ENCODE measurements at regions of chr17 and their contacts with region 1.

Region 1: DNA sequence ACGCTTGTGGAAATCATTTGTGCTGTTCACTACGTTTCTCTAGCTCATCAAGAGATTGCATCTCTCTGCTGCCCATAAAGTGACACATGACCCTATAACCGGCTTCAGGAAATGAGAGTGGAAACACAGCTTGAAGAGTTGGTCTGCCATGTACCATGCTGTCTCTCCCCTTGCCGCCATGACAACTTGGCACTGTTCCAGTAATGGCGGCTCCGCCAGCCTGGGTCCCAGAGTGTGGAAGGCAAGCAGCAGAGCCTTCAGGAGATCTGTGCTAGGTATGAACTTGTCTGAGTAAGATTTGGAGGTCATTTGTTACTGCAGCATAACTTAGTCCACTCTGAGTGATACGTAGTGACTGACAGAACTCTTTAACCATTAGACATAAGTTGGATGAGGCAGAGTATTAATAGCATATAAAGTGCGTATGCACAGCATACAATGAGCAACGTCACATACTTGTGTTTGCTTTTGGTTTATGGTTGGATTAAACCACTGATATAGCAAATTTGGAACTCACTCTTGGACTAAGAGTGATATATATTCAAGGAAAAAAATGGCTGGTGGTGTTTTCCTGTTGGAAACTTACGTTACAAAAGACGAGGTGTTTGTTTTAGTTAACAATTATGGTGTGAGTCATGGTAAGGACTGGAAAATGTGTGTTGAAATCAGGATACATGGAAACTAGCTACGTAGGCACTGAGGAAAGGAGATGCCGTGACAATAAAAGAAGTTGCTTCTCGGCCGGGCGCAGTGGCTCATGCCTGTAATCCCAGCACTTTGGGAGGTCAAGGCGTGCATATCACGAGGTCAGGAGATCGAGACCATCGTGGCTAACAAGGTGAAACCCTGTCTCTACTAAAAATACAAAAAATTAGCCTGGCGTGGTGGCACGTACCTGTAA is 24.4 kb upstream of the PMP22 start:
- DNase-seq: no peak
- H3K4me3 Mint-ChIP-seq: no peak overlapping the region
- H3K27ac Mint-ChIP-seq: no peak overlapping the region
- H3K4me1 Mint-ChIP-seq: no peaks in the 10 kb centered on the region
- H3K27me3 Mint-ChIP-seq: peaks cover 4% of the 10 kb centered on the region

Region 2: GRCh38 chr17:15247891-15248529 is 41.5 kb before region 1 on chr17:
- intact Hi-C with region 1: no loop called
- DNase-seq: no peak
- H3K4me3 Mint-ChIP-seq: no peak overlapping the region
- H3K27ac Mint-ChIP-seq: no peak overlapping the region
- H3K4me1 Mint-ChIP-seq: no peaks in the 10 kb centered on the region
- H3K27me3 Mint-ChIP-seq: no peaks in the 10 kb centered on the region

Region 3: DNA sequence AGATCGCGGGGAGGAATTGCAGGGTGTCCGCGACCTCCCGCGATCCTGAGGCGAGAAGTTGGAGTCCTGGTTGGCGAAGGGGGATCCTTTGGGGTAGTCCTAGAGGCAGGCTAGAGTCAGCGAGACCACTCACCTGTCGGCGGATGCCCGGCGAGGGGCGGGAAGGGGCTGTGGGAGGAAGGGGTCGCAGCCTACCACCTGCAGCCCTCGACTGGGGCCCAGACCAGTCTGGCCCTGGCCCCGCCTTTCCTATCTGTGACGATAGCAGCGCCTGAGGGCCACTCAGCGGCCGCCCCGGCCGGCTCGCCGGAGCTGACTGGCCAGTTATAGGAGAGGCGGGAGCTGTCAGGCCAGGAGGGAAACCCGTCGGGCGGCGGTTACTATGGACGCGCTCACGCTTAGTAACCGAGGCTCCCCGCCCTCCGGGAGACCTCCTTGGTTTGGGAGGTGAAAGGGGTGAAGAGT is 51.9 kb after region 1 on chr17 and contains the start of gene TEKT3:
- intact Hi-C with region 1: loop called (anchors 10 kb)
- DNase-seq: no peak
- H3K4me3 Mint-ChIP-seq: no peak within 1 kb of the TSS
- H3K27ac Mint-ChIP-seq: no peak within 1 kb of the TSS
- H3K4me1 Mint-ChIP-seq: peaks cover 5% of the 10 kb centered on the region
- H3K27me3 Mint-ChIP-seq: peaks cover 43% of the 10 kb centered on the region
- total RNA-seq, gene TEKT3: not detected in 2 replicates